ENCODE measurements at regions of chr4 and their contacts with region 1.

Region 1: GRCh38 chr4:153142700-153143438 is 61.4 kb upstream of the TRIM2 start:
- DNase-seq: peak; percentile 85
- H3K4me3 Mint-ChIP-seq: no peak overlapping the region
- H3K27ac Mint-ChIP-seq: no peak overlapping the region
- H3K4me1 Mint-ChIP-seq: peaks cover 17% of the 10 kb centered on the region
- H3K27me3 Mint-ChIP-seq: no peaks in the 10 kb centered on the region

Region 2: GRCh38 chr4:153318696-153319320 is 175.9 kb after region 1 on chr4:
- CTCF ChIA-PET with region 1: interaction called, 26 read pairs
- intact Hi-C with region 1: loop called (anchors 1 kb)
- DNase-seq: peak; percentile 50
- H3K4me3 Mint-ChIP-seq: no peak overlapping the region
- H3K27ac Mint-ChIP-seq: no peak overlapping the region
- H3K4me1 Mint-ChIP-seq: no peaks in the 10 kb centered on the region
- H3K27me3 Mint-ChIP-seq: no peaks in the 10 kb centered on the region

Region 3: DNA sequence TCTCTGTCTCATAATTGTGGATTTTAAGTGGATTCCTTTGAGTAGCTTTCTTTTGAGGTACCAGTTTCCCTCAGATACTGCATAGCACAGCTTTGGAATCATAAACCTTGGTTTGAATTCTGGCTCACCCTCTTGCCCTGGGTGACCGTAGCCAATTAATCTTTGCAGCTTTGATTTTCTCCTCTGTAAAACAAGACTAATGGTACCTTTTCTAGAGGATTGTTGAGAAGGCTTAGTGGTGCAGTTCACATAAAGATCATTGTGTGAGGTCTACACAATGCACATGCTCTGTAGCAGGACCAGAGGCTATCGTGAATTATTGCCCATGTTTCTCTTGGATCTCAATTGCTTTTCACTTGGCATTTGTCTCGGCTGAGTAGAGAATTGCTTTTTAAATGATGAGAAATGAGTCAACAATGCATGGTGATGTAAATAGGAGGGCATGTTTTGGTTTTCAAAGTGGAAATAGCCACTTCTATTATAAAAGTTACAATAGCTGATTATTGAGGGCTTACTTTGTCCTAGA is 371.2 kb after region 1 on chr4:
- CTCF ChIA-PET with region 1: no interaction called
- intact Hi-C with region 1: no loop called
- DNase-seq: no peak
- H3K4me3 Mint-ChIP-seq: no peak overlapping the region
- H3K27ac Mint-ChIP-seq: peak overlapping the region; percentile 88
- H3K4me1 Mint-ChIP-seq: peaks cover 77% of the 10 kb centered on the region
- H3K27me3 Mint-ChIP-seq: no peaks in the 10 kb centered on the region

Region 4: GRCh38 chr4:153573881-153574802 is 431.3 kb after region 1 on chr4:
- CTCF ChIA-PET with region 1: interaction called, 3 read pairs
- intact Hi-C with region 1: loop called (anchors 2 kb)
- DNase-seq: peak; percentile 78
- H3K4me3 Mint-ChIP-seq: no peak overlapping the region
- H3K27ac Mint-ChIP-seq: peak overlapping the region; percentile 74
- H3K4me1 Mint-ChIP-seq: peaks cover 76% of the 10 kb centered on the region
- H3K27me3 Mint-ChIP-seq: no peaks in the 10 kb centered on the region

Region 5: GRCh38 chr4:153649572-153649991 is 506.7 kb after region 1 on chr4:
- CTCF ChIA-PET with region 1: interaction called, 13 read pairs
- intact Hi-C with region 1: loop called (anchors 1 kb)
- DNase-seq: peak; percentile 44
- H3K4me3 Mint-ChIP-seq: no peak overlapping the region
- H3K27ac Mint-ChIP-seq: no peak overlapping the region
- H3K4me1 Mint-ChIP-seq: peaks cover 32% of the 10 kb centered on the region
- H3K27me3 Mint-ChIP-seq: no peaks in the 10 kb centered on the region